ENCODE measurements at regions of chr6 and their contacts with region 1.

Region 1: DNA sequence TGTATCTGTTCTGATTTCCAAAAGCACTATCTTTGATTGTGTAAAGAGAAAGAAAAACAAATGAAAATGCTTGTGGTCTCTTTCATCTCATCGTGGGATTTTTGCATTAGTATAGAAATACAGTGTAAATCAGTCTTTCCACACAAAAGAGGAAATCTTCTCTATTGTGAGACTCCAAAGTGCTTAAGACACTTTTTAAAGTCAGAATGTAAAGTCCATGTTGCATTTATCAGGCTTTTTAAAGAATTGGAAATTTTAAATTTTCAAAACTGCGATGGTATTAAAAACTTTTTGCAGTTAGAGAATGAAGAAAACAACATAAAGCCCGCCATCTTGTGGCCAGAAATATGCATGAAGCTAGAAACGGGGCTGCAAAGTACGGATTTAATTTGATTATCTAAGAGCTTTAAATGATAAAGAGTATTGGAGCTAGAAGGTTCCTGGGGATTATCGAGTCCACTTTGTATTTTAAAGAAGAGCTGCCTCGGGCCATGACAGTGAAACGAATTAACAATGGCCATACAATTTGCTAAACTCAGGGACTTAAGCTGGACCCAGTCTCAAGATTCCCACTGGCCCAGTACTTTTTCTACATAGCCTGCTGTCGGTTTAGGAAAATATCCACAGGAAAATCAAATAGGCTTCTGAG is 339.6 kb downstream of the ARHGAP18 start:
- DNase-seq: peak in 1 of 2 experiments; percentile 24
- H3K4me3 ChIP-seq: no peak overlapping the region
- H3K4me3 Mint-ChIP-seq: no peak overlapping the region
- H3K27ac Mint-ChIP-seq: no peak overlapping the region
- H3K4me1 ChIP-seq: peaks cover 5% of the 10 kb centered on the region; the same call in 1 of the 2 replicates
- H3K4me1 Mint-ChIP-seq: no peaks in the 10 kb centered on the region
- H3K27me3 ChIP-seq: no peaks in the 10 kb centered on the region
- H3K27me3 Mint-ChIP-seq: peaks cover 4% of the 10 kb centered on the region
- CTCF ChIP-seq: peak; percentile 40 to 62

Region 2: GRCh38 chr6:128725271-128726233 is 644.8 kb before region 1 on chr6:
- CTCF ChIA-PET with region 1: no interaction called
- POLR2A ChIA-PET with region 1: no interaction called
- intact Hi-C with region 1: loop called (anchors 5 kb)
- DNase-seq: peak in 1 of 2 experiments; percentile 45
- H3K4me3 ChIP-seq: no peak overlapping the region
- H3K4me3 Mint-ChIP-seq: no peak overlapping the region
- H3K27ac Mint-ChIP-seq: no peak overlapping the region
- H3K4me1 ChIP-seq: no peaks in the 10 kb centered on the region
- H3K4me1 Mint-ChIP-seq: no peaks in the 10 kb centered on the region
- H3K27me3 ChIP-seq: no peaks in the 10 kb centered on the region
- H3K27me3 Mint-ChIP-seq: peaks cover 16% of the 10 kb centered on the region
- CTCF ChIP-seq: peak; percentile 55 to 80

Region 3: DNA sequence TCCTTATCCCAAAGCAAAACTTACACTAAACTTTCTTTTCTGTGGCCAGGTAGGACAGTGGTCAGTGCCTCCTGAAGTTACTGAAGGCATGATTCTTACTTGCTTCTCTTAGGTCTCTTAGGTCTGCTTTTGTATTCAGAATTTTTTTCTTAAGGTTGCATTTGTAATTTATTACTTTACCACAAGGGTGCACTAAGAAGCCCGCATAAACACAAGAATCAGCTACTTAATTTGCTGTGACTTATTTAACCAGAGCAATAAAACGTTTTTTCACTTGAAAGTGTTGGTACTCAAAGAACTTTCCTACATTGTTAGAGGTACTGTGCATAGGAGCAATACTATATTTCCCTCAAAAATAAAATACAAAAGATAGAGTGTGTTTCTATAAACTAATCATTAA is 562.8 kb before region 1 on chr6:
- CTCF ChIA-PET with region 1: no interaction called
- POLR2A ChIA-PET with region 1: no interaction called
- intact Hi-C with region 1: loop called (anchors 1 kb)
- DNase-seq: peak in 1 of 2 experiments; percentile 4
- H3K4me3 ChIP-seq: no peak overlapping the region
- H3K4me3 Mint-ChIP-seq: no peak overlapping the region
- H3K27ac Mint-ChIP-seq: no peak overlapping the region
- H3K4me1 ChIP-seq: no peaks in the 10 kb centered on the region
- H3K4me1 Mint-ChIP-seq: no peaks in the 10 kb centered on the region
- H3K27me3 ChIP-seq: no peaks in the 10 kb centered on the region
- H3K27me3 Mint-ChIP-seq: peaks cover 8% of the 10 kb centered on the region
- CTCF ChIP-seq: peak; percentile 29 to 51

Measured in Caco-2 (cell line).